ENCODE measurements at regions of chr1 and their contacts with region 1.

Region 1: DNA sequence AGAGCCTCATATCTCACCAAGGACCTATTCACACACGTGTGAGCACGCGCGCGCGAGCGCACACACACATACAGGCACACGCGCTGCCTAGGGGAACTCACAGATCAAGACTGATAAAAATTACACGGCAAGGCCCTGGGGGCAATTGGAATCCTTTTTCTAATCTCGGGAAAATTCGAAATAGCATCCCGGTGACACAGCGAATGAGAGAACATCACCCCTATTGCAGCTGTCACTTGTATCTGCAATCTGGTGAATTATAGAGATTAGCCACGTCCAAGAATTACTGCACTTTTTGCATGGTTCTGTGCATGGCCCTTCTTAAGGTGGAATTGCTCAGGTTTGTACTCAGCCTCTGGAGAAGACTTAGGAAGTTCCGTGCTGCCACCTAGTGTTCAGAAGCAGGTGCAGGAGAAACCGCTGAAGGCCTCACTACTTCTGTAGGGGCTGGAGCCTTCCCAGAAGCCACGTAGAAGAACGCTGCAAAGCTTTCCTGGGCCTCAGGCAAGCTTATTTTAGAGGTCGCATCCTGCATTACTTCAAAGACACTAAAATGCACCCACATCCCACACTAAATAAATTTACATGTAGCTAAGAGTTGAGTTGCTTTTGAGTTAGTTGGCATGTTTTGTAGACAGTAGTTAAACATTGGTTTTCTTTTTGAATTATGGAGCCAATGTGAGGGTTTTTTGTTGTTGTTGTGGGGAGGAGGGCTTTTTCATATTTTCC is 229.2 kb upstream of the CAMK1G start:
- DNase-seq: peak; percentile 75
- H3K4me3 ChIP-seq: no peak overlapping the region
- H3K27ac ChIP-seq: no peak overlapping the region
- H3K27me3 ChIP-seq: no peaks in the 10 kb centered on the region
- CTCF ChIP-seq: peak; percentile 96

Region 2: DNA sequence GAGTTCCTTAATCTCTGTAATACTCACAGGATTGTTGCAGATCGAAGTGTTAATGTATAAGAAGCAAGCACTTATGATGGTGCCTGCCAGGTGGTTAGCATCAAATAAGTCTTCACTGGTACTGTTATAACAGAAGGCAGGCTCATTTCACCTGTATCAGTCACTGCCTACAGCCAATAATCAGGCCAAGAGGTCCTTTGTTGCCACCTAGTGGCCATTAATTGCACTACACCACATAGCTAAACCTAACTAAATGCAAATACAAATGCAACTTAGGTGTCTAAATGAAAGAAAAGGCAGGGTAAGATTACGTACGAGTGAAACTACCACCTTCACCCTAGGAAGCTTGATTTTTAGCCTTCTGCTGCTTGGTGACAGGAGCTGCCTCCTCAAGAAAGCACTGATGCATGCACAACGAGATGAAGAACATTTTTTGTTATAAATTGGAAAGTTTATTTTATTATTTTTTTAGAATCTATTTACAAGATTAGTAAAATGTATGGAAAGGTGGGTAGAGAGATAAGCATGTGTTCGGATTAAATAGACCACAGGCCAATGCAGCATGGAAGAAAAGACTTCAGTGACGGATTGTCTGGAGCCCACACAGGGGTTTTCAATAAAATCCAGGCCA is 105.5 kb before region 1 on chr1:
- CTCF ChIA-PET with region 1: interaction called, 40 read pairs
- POLR2A ChIA-PET with region 1: no interaction called
- DNase-seq: peak; percentile 16
- H3K4me3 ChIP-seq: no peak overlapping the region
- H3K27ac ChIP-seq: no peak overlapping the region
- H3K27me3 ChIP-seq: no peaks in the 10 kb centered on the region
- CTCF ChIP-seq: peak; percentile 89

Region 3: DNA sequence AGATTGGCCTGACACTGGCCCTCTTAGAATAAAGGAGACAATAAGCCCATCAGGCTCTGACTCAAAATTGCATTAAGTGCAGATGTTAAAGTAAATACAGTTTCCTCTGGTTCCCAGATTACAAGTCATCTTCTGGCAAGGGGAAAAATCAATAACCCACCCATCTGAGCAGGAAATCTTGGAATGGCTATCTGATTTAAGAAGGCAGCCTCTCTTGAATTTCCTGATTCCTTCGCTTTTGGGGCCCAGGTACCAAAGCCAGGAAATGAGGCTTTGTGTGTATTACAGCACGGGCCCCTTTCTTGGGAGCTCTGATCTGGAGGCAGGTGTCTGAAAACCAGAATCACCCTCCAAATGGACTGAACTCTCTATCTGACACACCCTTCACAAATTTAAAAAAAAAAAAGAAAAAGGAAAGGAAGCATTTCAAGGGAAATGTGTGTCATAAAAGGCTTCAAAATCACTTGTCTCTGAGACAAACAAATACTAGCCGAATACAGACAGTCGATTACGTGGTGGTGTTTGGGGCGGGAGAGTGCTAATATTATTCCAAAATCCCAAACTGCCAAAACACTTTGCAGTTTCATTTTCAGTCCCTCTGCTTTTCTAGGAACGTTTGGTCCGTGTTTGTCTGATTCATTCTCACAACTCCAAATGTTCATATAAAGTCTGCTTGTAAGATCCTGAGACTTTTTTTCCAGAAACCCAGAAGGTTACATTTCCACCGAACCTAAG is 11.7 kb before region 1 on chr1:
- CTCF ChIA-PET with region 1: interaction called, 40 read pairs
- POLR2A ChIA-PET with region 1: no interaction called
- DNase-seq: no peak
- H3K4me3 ChIP-seq: no peak overlapping the region
- H3K27ac ChIP-seq: no peak overlapping the region
- H3K27me3 ChIP-seq: peaks cover 3% of the 10 kb centered on the region
- CTCF ChIP-seq: no peak

Region 4: DNA sequence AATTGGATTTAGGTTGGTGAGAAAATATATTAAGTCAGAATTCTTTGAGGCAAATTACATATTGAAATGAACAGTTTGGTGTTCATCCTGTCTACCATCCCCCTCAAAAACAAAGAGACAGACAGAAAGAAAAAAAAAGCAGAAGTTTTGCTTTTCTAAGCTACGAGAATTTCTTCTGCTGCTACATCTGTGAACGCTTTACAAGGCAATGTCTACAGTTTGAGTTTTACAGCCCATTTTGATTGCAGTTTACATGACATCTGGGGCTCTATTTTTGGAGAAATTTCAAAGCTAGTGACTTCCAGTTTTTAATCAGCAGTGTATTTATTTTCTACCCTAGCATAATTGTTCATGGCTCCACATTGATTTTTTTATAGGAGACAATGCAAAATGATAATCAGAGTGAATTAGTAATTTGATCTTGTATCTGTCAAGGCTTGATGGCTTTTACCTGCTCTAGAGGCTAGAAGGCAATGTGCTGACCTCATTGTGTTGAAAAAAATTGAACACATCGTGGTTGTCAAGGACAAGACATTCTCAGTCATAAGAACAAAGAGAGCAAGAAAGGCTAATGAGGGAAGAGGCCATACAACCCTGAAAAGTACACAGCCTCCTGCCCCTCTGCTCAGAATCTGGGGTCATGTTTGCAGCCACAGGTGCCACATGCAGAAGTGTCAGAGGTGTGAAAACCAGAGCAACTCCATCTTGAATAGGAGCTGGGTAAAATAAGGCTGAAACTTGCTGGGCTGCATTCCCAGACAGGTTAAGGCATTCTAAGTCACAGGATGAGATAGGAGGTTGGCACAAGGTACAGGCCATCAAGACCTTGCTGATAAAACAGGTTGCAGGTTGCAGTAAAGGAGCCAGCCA is 28.2 kb after region 1 on chr1:
- CTCF ChIA-PET with region 1: interaction called, 38 read pairs
- POLR2A ChIA-PET with region 1: no interaction called
- DNase-seq: no peak
- H3K4me3 ChIP-seq: no peak overlapping the region
- H3K27ac ChIP-seq: no peak overlapping the region
- H3K27me3 ChIP-seq: no peaks in the 10 kb centered on the region
- CTCF ChIP-seq: no peak

Region 5: GRCh38 chr1:209405183-209405814 is 51.0 kb after region 1 on chr1:
- CTCF ChIA-PET with region 1: interaction called, 26 read pairs
- POLR2A ChIA-PET with region 1: no interaction called
- DNase-seq: peak; percentile 15
- H3K4me3 ChIP-seq: peak overlapping the region; percentile 8; the same call in 1 of the 2 replicates
- H3K27ac ChIP-seq: no peak overlapping the region
- H3K27me3 ChIP-seq: no peaks in the 10 kb centered on the region
- CTCF ChIP-seq: no peak